WTC11 (cell line): ENCODE measurements at regions of chr9 and their contacts with region 1.

Region 1: DNA sequence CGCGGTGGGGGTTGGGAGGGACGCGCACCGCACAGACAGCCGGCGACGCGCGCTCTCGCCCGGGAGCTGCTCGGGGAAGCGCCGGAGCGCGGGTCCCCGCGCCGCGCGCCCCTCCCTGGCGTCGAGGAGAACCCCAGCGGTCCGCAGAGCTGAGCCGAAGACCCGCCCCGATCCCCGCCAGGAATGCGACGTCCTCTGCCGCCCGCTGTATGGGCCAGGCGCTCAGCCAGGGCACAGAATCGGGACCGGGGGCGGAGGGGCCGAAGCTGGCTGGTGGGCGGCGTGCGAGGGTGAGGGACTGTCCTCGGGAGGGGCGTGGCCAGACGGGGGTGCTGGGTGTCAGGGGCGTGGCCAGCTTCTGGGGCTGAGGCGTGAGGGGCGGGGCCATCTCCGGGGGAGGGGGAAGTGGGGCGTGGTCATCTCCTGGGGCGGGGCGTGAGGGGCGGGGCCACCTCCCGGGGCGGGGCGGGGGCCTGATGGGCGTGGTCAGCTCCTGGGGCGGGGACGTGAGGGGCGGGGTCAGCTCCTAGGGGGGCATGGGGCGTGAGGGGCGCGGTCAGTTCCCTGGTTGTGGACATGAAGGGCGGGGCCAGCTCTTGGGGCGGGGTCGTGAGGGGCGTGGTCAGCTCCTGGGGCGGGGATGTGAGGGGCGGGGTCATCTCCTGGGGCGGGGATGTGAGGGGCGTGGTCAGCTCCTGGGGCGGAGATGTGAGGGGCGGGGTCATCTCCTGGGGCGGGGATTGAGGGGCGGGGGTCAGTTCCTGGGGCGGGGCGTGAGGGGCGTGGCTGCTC is 965 bp downstream of the PTGDS start:
- DNase-seq: peak; percentile 96
- ATAC-seq: peak; percentile 76
- H3K4me3 Mint-ChIP-seq: peak overlapping the region; percentile 66
- H3K27ac Mint-ChIP-seq: no peak overlapping the region
- H3K4me1 Mint-ChIP-seq: peaks cover 3% of the 10 kb centered on the region; the same call in 1 of the 2 replicates
- H3K27me3 Mint-ChIP-seq: peaks cover 3% of the 10 kb centered on the region; the same call in 1 of the 2 replicates
- CTCF ChIP-seq: no peak

Region 2: GRCh38 chr9:136439550-136440408 is 538.5 kb before region 1 on chr9 and contains the start of gene INPP5E:
- CTCF ChIA-PET with region 1: no interaction called
- POLR2A ChIA-PET with region 1: no interaction called
- DNase-seq: peak; percentile 87
- ATAC-seq: peak; percentile 80
- H3K4me3 Mint-ChIP-seq: peak within 1 kb of the TSS; percentile 80
- H3K27ac Mint-ChIP-seq: peak within 1 kb of the TSS; percentile 63
- H3K4me1 Mint-ChIP-seq: peaks cover 15% of the 10 kb centered on the region
- H3K27me3 Mint-ChIP-seq: no peaks in the 10 kb centered on the region
- CTCF ChIP-seq: peak; percentile 70; the same call in 1 of the 2 replicates
- total RNA-seq, gene INPP5E: 23.6 to 25.5 TPM (median 24.0 TPM) in 3 replicates

Region 3: GRCh38 chr9:136799854-136800657 is 178.2 kb before region 1 on chr9:
- CTCF ChIA-PET with region 1: interaction called, 13 read pairs
- POLR2A ChIA-PET with region 1: no interaction called
- DNase-seq: peak; percentile 92
- ATAC-seq: peak; percentile 54
- H3K4me3 Mint-ChIP-seq: peak overlapping the region; percentile 90
- H3K27ac Mint-ChIP-seq: peak overlapping the region; percentile 97
- H3K4me1 Mint-ChIP-seq: peaks cover 17% of the 10 kb centered on the region
- H3K27me3 Mint-ChIP-seq: peaks cover 58% of the 10 kb centered on the region
- CTCF ChIP-seq: no peak

Region 4: DNA sequence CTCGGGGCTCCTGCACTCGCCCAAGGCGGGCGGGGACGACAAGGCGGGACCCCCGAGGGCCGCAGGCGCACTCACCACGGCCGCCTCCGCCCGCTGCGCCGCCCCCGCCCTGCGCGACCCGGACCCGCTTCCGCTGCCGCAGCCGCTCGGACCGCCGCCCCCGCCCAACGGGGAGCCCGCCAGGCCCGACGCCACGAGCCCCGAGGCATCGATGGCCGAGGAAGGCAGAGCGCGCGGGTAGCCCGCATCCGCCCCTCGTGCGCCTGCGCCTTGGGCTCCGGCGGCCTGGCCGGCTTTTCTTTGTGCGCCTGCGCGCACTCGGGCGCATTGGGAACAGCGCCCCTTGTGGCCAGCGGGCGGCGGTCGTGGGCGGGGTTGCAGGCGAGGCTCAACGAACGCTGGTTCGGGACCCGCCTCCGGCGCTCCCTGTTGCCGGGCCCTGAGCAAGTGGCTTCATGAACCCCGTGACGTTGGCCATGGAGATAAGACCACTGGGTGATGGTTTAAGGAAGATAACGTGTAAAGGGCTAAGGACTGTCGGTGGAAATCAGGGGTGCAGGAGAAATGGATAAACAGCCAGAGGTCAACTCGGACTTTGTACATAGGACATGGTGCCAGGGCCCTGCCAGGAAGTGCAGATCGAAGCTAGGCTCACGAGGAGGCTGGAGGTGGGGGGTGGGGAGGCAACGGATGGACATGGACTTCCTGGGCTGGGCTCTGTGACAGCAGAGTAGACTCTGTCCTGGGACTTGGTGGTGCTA is 33.6 kb before region 1 on chr9 and contains the starts of genes C8G and FBXW5:
- CTCF ChIA-PET with region 1: interaction called, 45 read pairs
- POLR2A ChIA-PET with region 1: no interaction called
- DNase-seq: peak; percentile 94
- ATAC-seq: peak; percentile 58
- H3K4me3 Mint-ChIP-seq: peak within 1 kb of the TSS; percentile 67
- H3K27ac Mint-ChIP-seq: no peak within 1 kb of the TSS
- H3K4me1 Mint-ChIP-seq: peaks cover 10% of the 10 kb centered on the region
- H3K27me3 Mint-ChIP-seq: no peaks in the 10 kb centered on the region
- CTCF ChIP-seq: peak; percentile 99
- total RNA-seq, gene C8G: 0.85 to 1.7 TPM (median 1.5 TPM) in 3 replicates
- total RNA-seq, gene FBXW5: 58.2 to 70.5 TPM (median 63.9 TPM) in 3 replicates

Region 5: DNA sequence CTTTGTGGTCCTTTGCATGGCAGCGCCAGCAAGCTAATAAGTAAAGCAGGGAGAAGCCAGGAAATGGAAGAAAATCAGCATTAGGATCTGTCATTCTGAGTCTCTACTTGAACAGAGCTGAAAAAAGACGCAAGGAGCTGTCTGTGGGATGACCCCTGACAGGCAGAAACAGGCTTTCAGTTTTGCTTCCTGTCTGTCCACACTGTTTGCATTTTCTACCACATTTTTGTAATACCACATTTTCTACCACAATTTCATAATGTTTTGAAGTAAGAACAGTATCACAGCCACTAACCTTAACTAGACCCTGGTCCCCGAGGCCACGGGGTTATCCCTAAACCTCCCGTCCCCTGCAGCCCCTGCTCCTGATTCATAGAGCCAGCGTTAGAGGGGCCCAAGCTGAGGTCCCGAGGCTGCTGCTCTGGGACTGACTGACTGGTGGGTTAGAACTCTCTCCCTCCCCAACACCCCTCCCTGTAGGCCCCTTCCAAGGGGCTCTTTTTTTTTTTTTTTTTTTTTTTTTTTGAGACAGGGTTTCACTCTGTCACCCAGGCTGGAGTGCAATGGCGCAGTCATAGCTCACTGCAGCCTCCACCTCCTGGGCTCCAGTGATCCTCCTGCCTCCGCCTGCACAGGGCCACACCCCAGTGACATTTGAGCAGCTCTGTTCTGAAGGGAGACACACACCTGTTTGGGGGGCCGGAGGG is 22.1 kb after region 1 on chr9:
- CTCF ChIA-PET with region 1: interaction called, 34 read pairs
- POLR2A ChIA-PET with region 1: interaction called, 3 read pairs
- DNase-seq: no peak
- ATAC-seq: no peak
- H3K4me3 Mint-ChIP-seq: no peak overlapping the region
- H3K27ac Mint-ChIP-seq: no peak overlapping the region
- H3K4me1 Mint-ChIP-seq: 0 out of 2 replicates have a peak, but pooled peaks cover 4% of the 10 kb centered on the region
- H3K27me3 Mint-ChIP-seq: peaks cover 6% of the 10 kb centered on the region; the same call in 1 of the 2 replicates
- CTCF ChIP-seq: no peak

Region 6: DNA sequence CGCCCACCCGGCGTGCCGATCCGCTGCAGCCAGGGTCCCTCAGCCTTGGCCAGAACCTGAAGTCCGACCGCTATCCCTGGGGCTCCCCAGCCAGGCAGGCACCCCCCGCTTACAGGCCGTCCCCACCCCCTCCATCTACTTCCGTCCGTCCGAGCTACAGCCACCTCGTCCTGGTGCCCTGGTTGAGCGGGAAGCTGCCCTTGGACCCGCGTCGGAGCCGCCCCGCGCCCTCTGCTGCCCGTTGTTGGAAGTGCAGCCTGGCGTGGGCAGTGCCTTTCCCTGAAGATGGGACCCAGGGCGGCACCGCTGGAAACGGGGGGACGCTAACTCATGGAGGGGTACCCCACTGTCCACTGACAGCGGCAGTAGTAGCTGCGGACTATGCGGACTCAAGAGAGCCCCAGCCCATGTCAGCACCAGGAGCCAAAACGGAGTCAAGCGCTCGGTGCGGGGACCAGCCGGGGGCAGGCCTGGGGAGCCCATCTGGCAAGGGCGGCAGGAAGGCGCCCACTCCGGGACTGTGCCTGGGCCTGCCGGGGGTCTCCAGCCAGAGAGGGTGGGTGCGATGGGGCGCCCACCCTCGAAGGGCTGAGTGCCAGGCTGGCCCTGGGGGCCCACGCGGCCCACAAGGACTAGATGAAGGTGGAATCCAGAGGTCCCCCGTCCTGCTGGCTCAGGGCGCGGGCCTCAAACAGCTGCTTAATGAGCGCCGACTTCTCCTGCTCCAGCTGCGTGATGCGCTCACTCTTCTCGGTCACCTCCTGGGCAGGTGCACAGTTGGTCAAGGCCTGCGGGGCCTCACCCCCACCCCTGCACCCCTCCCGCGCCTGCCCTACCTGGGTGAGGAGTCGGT is 86.0 kb after region 1 on chr9:
- CTCF ChIA-PET with region 1: interaction called, 18 read pairs
- POLR2A ChIA-PET with region 1: interaction called, 3 read pairs
- DNase-seq: peak; percentile 84
- ATAC-seq: peak; percentile 51
- H3K4me3 Mint-ChIP-seq: no peak overlapping the region
- H3K27ac Mint-ChIP-seq: no peak overlapping the region
- H3K4me1 Mint-ChIP-seq: peaks cover 12% of the 10 kb centered on the region
- H3K27me3 Mint-ChIP-seq: peaks cover 6% of the 10 kb centered on the region
- CTCF ChIP-seq: peak; percentile 99

Region 7: DNA sequence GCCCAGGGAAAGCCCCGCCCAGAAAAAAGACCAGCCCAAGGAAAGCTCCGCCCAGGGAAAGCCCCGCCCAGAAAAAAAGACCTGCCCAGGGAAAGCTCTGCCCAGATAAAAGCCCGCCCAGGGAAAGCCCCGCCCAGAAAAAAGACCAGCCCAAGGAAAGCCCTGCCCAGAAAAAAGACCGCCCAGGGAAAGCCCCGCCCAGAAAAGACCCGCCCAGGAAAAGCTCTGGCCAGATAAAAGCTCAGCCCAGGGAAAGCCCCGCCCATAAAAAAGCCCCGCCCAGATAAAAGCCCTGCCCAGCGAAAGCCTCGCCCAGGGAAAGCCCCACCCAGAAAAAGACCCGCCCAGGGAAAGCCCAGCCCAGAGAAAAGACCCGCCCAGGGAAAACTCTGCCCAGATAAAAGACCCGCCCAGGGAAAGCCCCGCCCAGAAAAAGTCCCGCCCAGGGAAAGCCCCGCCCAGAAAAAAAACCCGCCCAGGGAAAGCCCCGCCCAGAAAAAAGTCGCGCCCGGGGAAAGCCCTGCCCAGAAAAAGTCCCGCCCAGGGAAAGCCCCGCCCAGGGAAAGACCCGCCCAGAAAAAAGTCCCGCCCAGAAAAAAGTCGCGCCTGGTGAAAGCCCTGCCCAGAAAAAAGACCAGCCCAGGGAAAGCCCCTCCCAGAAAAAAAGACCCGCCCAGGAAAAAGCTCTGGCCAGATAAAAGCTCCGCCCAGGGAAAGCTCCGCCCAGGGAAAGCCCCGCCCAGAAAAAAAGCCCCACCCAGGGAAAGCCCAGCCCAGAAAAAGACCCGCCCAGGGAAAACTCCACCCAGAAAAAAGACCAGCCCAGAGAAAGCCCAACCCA is 172.6 kb after region 1 on chr9:
- CTCF ChIA-PET with region 1: no interaction called
- POLR2A ChIA-PET with region 1: no interaction called
- DNase-seq: peak; percentile 80
- ATAC-seq: peak; percentile 54
- H3K4me3 Mint-ChIP-seq: no peak overlapping the region
- H3K27ac Mint-ChIP-seq: no peak overlapping the region
- H3K4me1 Mint-ChIP-seq: no peaks in the 10 kb centered on the region; the same call in 1 of the 2 replicates
- H3K27me3 Mint-ChIP-seq: peaks cover 17% of the 10 kb centered on the region
- CTCF ChIP-seq: no peak